ENCODE measurements at regions of chr15 and their contacts with region 1.

Region 1: GRCh38 chr15:81296673-81297072 is 27.3 kb downstream of the STARD5 start:
- DNase-seq: peak; percentile 90
- ATAC-seq: peak; percentile 72
- H3K4me3 Mint-ChIP-seq: peak overlapping the region; percentile 99
- H3K27ac Mint-ChIP-seq: peak overlapping the region; percentile 93
- H3K4me1 Mint-ChIP-seq: peaks cover 53% of the 10 kb centered on the region
- H3K27me3 Mint-ChIP-seq: no peaks in the 10 kb centered on the region

Region 2: DNA sequence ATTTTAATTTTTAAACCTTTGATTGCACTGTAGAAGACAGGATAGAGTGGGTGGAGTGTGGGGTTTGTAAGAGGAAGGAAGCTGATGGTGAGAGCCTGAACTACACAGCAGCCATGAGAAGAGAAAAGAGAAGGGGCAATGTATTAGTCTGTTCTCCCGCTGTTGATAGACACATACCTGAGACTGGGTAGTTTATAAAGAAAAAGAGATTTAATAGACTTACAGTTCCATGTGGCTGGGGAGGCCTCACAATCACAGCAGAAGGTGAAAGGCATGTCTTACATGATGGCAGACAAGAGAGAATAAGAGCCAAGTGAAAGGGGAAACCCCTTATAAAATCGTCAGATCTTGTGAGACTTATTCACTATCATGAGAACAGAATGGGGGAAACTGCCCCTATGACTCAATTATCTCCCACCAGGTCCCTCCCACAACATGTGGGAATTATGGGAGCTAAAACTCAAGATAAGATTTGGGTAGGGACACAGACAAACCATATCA is 10.0 kb before region 1 on chr15:
- CTCF ChIA-PET with region 1: interaction called, 31 read pairs
- POLR2A ChIA-PET with region 1: interaction called, 72 read pairs
- DNase-seq: no peak
- ATAC-seq: peak; percentile 77
- H3K4me3 Mint-ChIP-seq: peak overlapping the region; percentile 63
- H3K27ac Mint-ChIP-seq: peak overlapping the region; percentile 89
- H3K4me1 Mint-ChIP-seq: peaks cover 65% of the 10 kb centered on the region
- H3K27me3 Mint-ChIP-seq: no peaks in the 10 kb centered on the region